Activated B cell treated with CpG ODN at 0.5 μM for 24 hours (primary cell): ENCODE measurements at regions of chr9 and their contacts with region 1.

Region 1: GRCh38 chr9:101140764-101141163 is 112.2 kb downstream of the PLPPR1 start:
- DNase-seq: no peak
- ATAC-seq: no peak
- H3K4me3 Mint-ChIP-seq: no peak overlapping the region
- H3K27ac Mint-ChIP-seq: no peak overlapping the region
- H3K4me1 Mint-ChIP-seq: no peaks in the 10 kb centered on the region
- H3K27me3 Mint-ChIP-seq: no peaks in the 10 kb centered on the region
- CTCF ChIP-seq: no peak

Region 2: DNA sequence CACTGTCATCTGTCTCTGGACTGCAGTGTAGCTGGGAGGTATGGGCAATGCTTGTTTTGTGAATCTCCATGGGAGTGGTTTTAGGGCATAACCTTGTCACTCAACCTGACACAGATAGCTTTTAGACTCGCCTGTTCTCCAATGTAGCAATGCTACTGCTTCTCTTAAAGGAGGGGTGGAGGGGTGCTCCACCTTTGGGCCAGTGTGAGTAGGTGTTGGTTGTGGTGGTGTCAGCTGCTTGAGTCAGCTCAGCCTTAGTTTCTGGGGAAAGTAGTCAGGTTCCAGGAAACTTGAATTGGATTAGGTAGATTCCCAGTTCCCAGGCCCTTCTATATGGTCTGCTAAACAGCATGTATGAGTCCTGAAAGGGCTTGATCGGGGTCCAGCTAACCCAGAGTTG is 203.4 kb before region 1 on chr9:
- CTCF ChIA-PET with region 1: no interaction called
- POLR2A ChIA-PET with region 1: interaction called, 10 read pairs
- intact Hi-C with region 1: no loop called
- DNase-seq: no peak
- ATAC-seq: no peak
- H3K4me3 Mint-ChIP-seq: no peak overlapping the region
- H3K27ac Mint-ChIP-seq: no peak overlapping the region
- H3K4me1 Mint-ChIP-seq: no peaks in the 10 kb centered on the region
- H3K27me3 Mint-ChIP-seq: no peaks in the 10 kb centered on the region
- CTCF ChIP-seq: no peak

Region 3: GRCh38 chr9:101037430-101037829 is 103.3 kb before region 1 on chr9:
- CTCF ChIA-PET with region 1: no interaction called
- POLR2A ChIA-PET with region 1: no interaction called
- intact Hi-C with region 1: no loop called
- DNase-seq: no peak
- ATAC-seq: no peak
- H3K4me3 Mint-ChIP-seq: no peak overlapping the region
- H3K27ac Mint-ChIP-seq: no peak overlapping the region
- H3K4me1 Mint-ChIP-seq: no peaks in the 10 kb centered on the region
- H3K27me3 Mint-ChIP-seq: peaks cover 6% of the 10 kb centered on the region
- CTCF ChIP-seq: no peak